Posterior vena cava (tissue), 2 donors: ENCODE measurements at regions of chr11 and their contacts with region 1.

Region 1: GRCh38 chr11:10480026-10480425 is 25.0 kb downstream of the AMPD3 start:
- DNase-seq: no peak

Region 2: GRCh38 chr11:9982800-9983579 is 497.0 kb before region 1 on chr11:
- intact Hi-C with region 1: no loop called
- DNase-seq: no peak

Region 3: DNA sequence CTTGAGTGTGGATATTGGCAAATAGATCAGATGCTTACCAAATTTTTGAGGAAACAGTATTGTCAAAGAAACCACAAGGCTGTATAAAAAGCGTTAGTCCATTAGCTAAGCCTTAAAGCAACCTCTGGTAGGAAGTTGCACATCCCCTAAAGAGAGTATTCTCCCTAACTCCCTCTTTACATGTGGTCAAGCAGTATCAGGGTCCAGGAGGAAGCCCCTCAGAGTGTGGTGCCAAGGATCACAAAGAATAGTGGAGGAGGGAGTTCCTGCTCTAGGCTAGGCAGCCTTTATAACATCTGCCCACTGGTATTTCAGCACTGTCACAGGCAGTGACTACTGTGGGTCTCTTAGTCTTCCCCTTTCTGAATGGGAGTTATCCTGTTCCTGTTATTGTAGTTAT is 43.8 kb before region 1 on chr11:
- intact Hi-C with region 1: loop called in 1 of 2 experiments (anchors 1 kb)
- DNase-seq: no peak

Region 4: DNA sequence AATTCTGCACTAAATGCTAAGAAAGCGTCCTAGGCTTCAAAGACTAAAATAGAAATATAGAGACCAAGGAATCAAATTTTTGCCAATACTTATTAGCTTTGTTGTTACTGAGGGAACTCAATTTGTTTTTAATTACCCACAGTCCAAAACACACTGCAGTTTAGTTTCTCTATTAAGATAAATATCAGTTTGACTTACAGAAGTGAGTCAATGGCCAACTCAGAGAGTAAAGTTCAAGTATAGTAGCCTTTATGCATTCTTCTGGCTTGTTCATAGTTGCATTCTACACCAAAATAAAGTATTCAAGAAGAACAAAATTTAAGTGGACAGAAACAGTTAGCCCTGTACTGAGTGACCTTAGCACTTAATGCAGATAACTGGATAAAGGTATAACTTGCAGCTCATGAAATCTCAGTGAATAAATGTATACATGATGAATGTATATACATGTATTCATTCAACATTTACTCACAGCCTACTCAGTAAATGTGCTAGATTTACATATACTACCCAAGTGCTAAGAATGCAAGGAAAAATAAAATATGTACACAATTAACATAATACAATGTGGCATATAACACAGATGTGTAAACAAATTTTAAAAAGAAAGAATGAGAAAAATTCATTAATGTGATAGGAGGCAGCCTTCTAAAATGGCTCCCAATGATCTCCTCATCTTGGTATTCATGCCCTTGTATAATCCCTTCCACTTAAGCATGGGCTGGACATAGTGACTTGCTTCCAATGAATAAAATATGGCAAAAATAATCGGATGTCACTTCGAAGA is 70.7 kb after region 1 on chr11:
- intact Hi-C with region 1: no loop called
- DNase-seq: no peak